ENCODE measurements at regions of chr10 and their contacts with region 1.

Region 1: DNA sequence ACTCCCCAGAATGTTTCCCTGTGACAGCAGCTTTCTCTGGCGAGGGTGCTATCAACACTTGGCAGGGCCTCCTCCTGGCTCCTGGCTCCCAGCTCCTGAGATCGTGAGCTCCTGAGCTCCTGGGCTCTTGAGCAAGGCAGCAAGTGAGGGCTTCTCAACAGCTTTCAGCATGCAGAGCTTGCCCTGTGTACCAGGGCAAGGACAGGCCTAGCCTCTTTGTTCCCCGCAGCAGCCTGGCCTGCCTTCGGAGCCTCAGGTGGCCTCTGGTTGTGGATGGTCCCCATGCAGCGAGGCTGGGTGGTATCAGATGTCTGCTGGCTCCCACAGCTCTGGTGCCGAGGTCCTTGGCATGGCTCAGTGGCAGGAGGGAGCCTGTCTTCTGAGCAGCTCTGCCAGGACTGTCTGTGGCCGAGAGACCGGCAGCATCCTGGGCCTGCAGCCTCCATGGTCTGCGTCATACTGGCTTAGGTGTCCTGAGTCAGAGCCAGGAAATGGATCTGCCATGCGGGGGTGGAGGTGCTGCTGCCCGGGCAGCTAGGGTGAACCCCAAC is 44.2 kb downstream of the ZMIZ1 start:
- DNase-seq: peak; percentile 32 to 54
- ATAC-seq: peak; percentile 30 to 81 (median 60)
- H3K4me3 ChIP-seq: no peak overlapping the region
- H3K27ac ChIP-seq: peak overlapping the region; percentile 70 to 92 (median 84)
- H3K4me1 ChIP-seq: peaks cover 51 to 99% (median 96%) of the 10 kb centered on the region in 9 donors
- H3K27me3 ChIP-seq: no peaks in the 10 kb centered on the region
- CTCF ChIP-seq: no peak

Region 2: GRCh38 chr10:79130846-79131245 is 17.9 kb after region 1 on chr10:
- intact Hi-C with region 1: loop called in 1 of 10 experiments (anchors 2 kb)
- DNase-seq: no peak
- ATAC-seq: no peak
- H3K4me3 ChIP-seq: no peak overlapping the region
- H3K27ac ChIP-seq: peak overlapping the region in 8 of 10 donors; percentile 59 to 97 (median 82)
- H3K4me1 ChIP-seq: peaks cover 46 to 100% (median 97%) of the 10 kb centered on the region in 9 donors
- H3K27me3 ChIP-seq: no peaks in the 10 kb centered on the region
- CTCF ChIP-seq: no peak

Measured in heart right ventricle (tissue), 16 donors.